Activated B cell treated with CpG ODN at 0.5 μM for 24 hours (primary cell): ENCODE measurements at regions of chr6 and their contacts with region 1.

Region 1: DNA sequence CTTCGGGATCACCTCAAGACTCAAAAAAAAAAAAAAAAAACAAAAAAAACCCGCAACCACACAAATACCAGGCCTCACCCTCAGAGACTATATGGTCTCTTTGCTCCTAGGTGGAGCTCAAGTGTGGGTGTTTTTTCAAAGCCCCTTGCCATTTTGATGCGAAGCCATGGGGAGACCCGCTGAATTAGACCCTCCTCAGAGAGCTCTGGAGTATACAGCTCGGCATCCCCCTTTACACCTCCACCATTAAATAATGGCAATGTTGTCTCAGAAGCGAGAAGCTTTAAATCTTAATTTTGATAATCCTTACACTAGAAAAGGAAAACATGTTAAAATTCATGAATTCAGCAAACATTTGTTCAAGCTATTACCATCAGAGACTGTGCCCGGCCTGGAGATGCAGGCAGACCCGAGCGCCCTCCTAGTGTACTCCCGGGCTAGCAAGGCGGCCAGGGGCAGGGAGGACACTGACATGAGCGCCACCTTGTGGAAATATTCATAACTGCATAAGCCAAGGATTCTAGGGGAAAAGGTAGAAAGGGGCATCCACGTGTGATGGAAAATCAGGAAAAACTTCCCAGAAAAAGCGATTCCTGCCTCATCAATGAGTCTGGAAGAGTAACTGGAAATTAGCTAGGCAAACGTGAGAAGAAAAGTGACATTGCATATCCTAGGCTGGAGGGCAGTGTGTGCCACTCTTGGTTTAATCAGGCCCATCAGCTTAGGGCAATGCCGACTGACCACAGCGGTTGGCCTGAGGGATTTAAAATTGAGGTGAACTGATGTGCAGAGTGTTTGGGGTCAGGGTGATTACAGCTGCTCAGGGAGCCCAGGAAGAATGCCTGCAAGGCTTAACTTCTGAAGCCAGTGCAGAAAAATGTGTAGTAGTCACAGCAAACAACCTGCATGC is 72.5 kb downstream of the B3GAT2 start:
- DNase-seq: no peak
- ATAC-seq: peak; percentile 85
- H3K4me3 Mint-ChIP-seq: no peak overlapping the region
- H3K27ac Mint-ChIP-seq: no peak overlapping the region
- H3K4me1 Mint-ChIP-seq: no peaks in the 10 kb centered on the region
- H3K27me3 Mint-ChIP-seq: peaks cover 12% of the 10 kb centered on the region
- CTCF ChIP-seq: peak; percentile 78

Region 2: DNA sequence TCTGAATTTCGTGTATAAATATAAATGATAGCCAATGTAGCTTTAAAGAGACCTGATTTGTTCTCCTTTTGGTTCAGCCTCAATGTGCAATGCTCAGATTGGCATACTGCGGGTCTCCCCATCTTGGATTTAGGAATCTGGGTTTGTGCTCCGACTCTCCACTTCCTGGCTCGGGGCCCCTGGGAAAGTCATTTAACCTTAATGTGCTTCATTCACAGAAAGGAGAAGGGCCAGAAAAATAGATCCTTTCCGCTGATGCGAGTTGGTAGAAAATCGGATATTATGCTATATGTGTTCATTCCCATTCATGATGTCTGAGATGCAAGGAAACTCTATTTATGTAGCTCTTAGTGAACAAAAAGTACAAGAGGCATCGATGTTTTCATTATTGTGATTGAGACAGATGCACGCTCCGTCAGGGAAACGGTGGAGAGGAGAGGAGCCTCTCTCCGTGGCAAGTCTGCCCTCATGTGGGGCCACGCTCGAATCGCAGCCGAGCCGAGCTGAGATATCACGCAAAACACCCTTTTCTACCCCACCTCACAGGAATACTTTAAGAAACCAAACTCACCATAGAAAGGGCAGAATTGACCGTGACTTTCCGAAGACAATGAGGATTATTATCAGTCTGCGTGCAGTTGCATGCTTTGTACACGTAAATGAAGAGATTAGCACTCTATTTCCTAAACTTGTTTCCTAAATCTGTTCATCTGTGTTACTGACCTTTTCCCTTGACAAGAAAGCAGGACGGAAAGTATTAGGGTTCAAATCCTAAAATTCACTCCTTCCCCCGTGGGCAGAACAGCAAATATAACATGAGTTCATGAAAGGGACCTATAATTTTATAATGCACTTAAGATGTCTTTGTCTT is 718.0 kb before region 1 on chr6:
- CTCF ChIA-PET with region 1: no interaction called
- POLR2A ChIA-PET with region 1: no interaction called
- intact Hi-C with region 1: no loop called
- DNase-seq: no peak
- ATAC-seq: peak; percentile 52
- H3K4me3 Mint-ChIP-seq: no peak overlapping the region
- H3K27ac Mint-ChIP-seq: peak overlapping the region; percentile 4
- H3K4me1 Mint-ChIP-seq: no peaks in the 10 kb centered on the region
- H3K27me3 Mint-ChIP-seq: no peaks in the 10 kb centered on the region
- CTCF ChIP-seq: no peak

Region 3: GRCh38 chr6:70221025-70221714 is 663.2 kb before region 1 on chr6:
- CTCF ChIA-PET with region 1: interaction called, 12 read pairs
- POLR2A ChIA-PET with region 1: no interaction called
- intact Hi-C with region 1: loop called (anchors 1 kb)
- DNase-seq: no peak
- ATAC-seq: peak; percentile 68
- H3K4me3 Mint-ChIP-seq: no peak overlapping the region
- H3K27ac Mint-ChIP-seq: no peak overlapping the region
- H3K4me1 Mint-ChIP-seq: peaks cover 6% of the 10 kb centered on the region
- H3K27me3 Mint-ChIP-seq: peaks cover 3% of the 10 kb centered on the region
- CTCF ChIP-seq: no peak

Region 4: GRCh38 chr6:70310063-70310694 is 574.1 kb before region 1 on chr6:
- CTCF ChIA-PET with region 1: interaction called, 11 read pairs
- POLR2A ChIA-PET with region 1: no interaction called
- intact Hi-C with region 1: loop called (anchors 1 kb)
- DNase-seq: no peak
- ATAC-seq: no peak
- H3K4me3 Mint-ChIP-seq: no peak overlapping the region
- H3K27ac Mint-ChIP-seq: no peak overlapping the region
- H3K4me1 Mint-ChIP-seq: no peaks in the 10 kb centered on the region
- H3K27me3 Mint-ChIP-seq: peaks cover 11% of the 10 kb centered on the region
- CTCF ChIP-seq: no peak

Region 5: DNA sequence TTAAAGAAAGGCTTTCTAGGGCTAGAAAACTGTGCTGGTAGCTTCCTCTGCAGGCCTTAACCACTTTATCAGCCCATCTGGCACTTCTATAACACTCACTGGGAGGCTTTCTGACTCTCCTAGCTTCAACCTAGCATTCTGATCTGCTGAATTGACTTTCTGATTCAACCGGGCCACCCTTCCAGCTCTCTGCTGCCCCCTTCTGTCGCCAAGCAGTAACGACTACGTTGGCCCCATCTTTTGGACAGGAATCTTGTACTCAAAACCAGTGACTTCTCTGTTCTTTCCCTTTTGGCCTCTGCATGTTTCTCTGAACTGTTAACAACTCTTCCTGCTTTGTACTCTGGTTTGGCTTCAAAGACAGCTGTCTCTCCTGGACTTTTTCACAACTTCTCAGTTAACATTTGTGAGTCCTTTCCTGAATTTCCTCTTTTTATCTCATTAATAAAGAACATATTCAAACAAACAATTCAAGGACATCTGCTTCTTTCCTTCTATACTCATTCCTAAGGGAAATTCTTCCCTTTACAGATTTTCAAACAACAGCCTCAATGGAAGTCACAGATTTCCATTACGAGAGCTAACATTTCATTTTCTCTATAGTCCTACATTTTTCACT is 514.9 kb before region 1 on chr6:
- CTCF ChIA-PET with region 1: no interaction called
- POLR2A ChIA-PET with region 1: no interaction called
- intact Hi-C with region 1: loop called (anchors 5 kb)
- DNase-seq: peak; percentile 27
- ATAC-seq: peak; percentile 92
- H3K4me3 Mint-ChIP-seq: no peak overlapping the region
- H3K27ac Mint-ChIP-seq: no peak overlapping the region
- H3K4me1 Mint-ChIP-seq: no peaks in the 10 kb centered on the region
- H3K27me3 Mint-ChIP-seq: peaks cover 21% of the 10 kb centered on the region
- CTCF ChIP-seq: peak; percentile 73

Region 6: GRCh38 chr6:70520575-70520974 is 363.8 kb before region 1 on chr6:
- CTCF ChIA-PET with region 1: interaction called, 18 read pairs
- POLR2A ChIA-PET with region 1: no interaction called
- intact Hi-C with region 1: loop called (anchors 1 kb)
- DNase-seq: no peak
- ATAC-seq: no peak
- H3K4me3 Mint-ChIP-seq: no peak overlapping the region
- H3K27ac Mint-ChIP-seq: no peak overlapping the region
- H3K4me1 Mint-ChIP-seq: no peaks in the 10 kb centered on the region
- H3K27me3 Mint-ChIP-seq: no peaks in the 10 kb centered on the region
- CTCF ChIP-seq: no peak

Region 7: DNA sequence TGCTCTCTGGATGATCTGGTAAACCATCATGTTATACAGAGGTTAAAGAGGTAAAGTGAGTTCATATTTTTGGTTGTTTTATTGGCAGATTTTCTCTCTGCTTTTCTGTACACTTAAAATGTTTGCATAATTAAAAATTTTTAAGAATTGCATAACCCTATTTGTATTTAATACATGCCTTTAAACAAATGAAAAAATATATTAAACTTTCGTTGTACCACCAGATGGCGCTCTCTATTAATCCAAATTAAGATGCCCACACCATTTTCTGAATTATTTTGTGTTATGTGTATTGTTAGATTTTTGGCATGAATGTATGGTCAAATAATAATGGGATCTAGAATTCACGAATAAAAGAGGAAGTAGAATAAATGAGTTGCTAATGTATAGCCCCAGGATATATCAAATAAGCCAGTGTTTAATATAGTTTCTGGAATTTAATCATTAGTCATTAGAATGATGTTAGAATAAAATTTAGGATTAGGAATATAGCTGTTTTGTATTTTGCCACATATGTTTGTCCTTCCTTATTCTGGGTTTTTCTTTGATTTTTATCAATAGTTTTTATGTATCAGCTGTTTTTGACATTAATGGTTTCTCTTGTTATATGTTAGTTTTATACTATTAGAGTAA is 177.7 kb before region 1 on chr6:
- CTCF ChIA-PET with region 1: interaction called, 144 read pairs
- POLR2A ChIA-PET with region 1: no interaction called
- intact Hi-C with region 1: loop called (anchors 1 kb)
- DNase-seq: no peak
- ATAC-seq: no peak
- H3K4me3 Mint-ChIP-seq: no peak overlapping the region
- H3K27ac Mint-ChIP-seq: no peak overlapping the region
- H3K4me1 Mint-ChIP-seq: peaks cover 21% of the 10 kb centered on the region
- H3K27me3 Mint-ChIP-seq: no peaks in the 10 kb centered on the region
- CTCF ChIP-seq: peak; percentile 69

Region 8: DNA sequence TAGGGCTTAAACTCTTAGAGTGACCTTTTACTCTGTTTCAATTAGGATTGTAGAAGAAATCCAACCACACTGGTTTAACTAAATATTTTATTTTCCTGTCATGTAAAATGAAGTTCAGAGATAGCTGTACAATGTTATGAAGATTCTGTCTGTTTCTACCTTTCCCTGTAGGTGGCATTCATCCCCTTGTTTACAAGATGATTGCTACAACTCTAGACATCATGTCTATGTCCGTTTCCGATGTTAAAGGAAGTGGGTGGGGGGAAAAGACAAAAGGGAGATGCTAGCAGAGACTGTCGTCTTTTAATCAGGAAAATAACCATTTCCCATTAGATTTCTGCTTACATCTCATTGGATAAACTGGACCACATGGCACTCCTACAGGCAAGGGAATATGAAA is 971.1 kb after region 1 on chr6:
- CTCF ChIA-PET with region 1: no interaction called
- POLR2A ChIA-PET with region 1: no interaction called
- intact Hi-C with region 1: no loop called
- DNase-seq: no peak
- ATAC-seq: no peak
- H3K4me3 Mint-ChIP-seq: no peak overlapping the region
- H3K27ac Mint-ChIP-seq: no peak overlapping the region
- H3K4me1 Mint-ChIP-seq: no peaks in the 10 kb centered on the region
- H3K27me3 Mint-ChIP-seq: no peaks in the 10 kb centered on the region
- CTCF ChIP-seq: no peak